GM12878 (cell line): ENCODE measurements at regions of chr4 and their contacts with region 1.

Region 1: DNA sequence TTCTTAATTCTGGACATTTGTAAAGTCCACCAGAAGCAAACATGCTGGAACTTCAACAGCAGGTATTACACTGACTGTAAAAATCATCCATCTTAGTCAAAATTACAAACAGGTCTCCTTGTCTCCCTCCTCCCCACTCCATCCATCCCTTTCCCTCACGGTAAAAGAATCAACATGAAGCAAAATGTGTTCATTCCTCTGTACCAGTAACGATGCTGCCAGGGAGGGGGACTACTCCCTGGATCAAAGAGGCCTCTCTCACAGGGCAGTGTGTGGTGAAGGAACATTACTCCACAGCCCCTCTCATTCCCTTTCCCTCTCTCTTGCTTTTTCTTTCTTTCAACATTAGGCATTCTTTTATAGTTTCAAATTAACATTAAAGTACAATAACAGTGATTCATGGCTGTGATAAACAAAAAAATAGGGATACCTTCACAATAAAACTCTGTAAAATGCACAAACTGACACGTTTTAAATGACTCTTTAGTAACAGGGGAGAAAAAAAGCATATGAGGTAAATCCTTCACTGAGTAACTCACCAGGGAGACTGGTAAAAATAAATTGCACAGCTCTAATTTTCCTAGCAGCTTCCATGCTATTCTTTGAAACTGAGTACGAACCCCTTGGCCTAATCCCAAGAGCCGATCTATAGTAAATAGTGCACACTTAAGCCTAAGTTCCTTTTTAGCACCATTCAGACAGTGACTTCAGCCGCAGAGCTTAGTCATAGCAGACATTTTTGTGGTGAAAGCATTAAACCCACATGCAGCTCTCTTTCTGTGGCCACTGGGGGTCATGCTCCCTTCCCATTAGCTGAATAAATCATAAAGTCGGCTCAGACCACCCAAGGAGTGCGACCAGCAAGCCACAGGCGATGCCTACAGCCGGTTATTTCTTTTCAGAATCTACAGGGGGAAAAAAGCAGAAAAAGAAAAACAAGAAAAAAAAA is 215.6 kb upstream of the GYPA start:
- DNase-seq: peak; percentile 51
- ATAC-seq: peak; percentile 98
- H3K4me3 ChIP-seq: no peak overlapping the region
- H3K27ac ChIP-seq: no peak overlapping the region
- H3K4me1 ChIP-seq: peaks cover 4% of the 10 kb centered on the region
- H3K27me3 ChIP-seq: peaks cover 0 to 4% of the 10 kb centered on the region in 2 experiments; a peak in 2 of 4 replicates
- CTCF ChIP-seq: peak in 1 of 3 experiments; percentile 21; a peak in 3 of 6 replicates
- EP300 ChIP-seq: no peak; a peak in 1 of 4 replicates
- POLR2A ChIP-seq: no peak
- RAD21 ChIP-seq: no peak; the same call in 1 of the 2 replicates

Region 2: DNA sequence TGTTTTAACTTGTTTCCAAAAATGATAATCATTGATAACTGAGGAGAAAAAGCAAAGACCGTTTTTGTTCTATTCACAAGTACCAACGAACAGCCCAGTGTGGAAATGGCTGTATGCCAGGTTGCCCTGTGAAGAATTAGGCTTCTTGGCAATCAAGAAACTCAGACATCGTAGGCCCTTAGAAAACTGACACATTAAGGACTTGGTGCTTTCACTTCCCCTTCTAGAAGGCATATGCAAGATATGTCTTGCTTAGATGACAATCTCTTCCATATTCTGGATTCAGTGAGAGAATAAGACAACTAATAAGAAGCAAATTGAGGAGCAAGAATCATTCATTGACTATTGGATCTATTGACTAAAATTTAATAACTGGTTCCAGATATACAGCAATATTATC is 685.3 kb after region 1 on chr4:
- CTCF ChIA-PET with region 1: no interaction called
- POLR2A ChIA-PET with region 1: no interaction called
- RAD21 ChIA-PET with region 1: no interaction called
- SMC1A ChIA-PET with region 1: no interaction called
- in situ Hi-C with region 1: no loop called
- intact Hi-C with region 1: loop called (anchors 10 kb)
- DNase-seq: peak; percentile 59
- ATAC-seq: peak; percentile 94
- H3K4me3 ChIP-seq: no peak overlapping the region
- H3K27ac ChIP-seq: no peak overlapping the region
- H3K4me1 ChIP-seq: peaks cover 5% of the 10 kb centered on the region; the same call in 1 of the 2 replicates
- H3K27me3 ChIP-seq: no peaks in the 10 kb centered on the region
- CTCF ChIP-seq: no peak
- EP300 ChIP-seq: peak in 1 of 2 experiments; percentile 87; a peak in 2 of 4 replicates
- POLR2A ChIP-seq: no peak
- RAD21 ChIP-seq: no peak